AG04450 (cell line): ENCODE measurements at regions of chr1 and their contacts with region 1.

Region 1: DNA sequence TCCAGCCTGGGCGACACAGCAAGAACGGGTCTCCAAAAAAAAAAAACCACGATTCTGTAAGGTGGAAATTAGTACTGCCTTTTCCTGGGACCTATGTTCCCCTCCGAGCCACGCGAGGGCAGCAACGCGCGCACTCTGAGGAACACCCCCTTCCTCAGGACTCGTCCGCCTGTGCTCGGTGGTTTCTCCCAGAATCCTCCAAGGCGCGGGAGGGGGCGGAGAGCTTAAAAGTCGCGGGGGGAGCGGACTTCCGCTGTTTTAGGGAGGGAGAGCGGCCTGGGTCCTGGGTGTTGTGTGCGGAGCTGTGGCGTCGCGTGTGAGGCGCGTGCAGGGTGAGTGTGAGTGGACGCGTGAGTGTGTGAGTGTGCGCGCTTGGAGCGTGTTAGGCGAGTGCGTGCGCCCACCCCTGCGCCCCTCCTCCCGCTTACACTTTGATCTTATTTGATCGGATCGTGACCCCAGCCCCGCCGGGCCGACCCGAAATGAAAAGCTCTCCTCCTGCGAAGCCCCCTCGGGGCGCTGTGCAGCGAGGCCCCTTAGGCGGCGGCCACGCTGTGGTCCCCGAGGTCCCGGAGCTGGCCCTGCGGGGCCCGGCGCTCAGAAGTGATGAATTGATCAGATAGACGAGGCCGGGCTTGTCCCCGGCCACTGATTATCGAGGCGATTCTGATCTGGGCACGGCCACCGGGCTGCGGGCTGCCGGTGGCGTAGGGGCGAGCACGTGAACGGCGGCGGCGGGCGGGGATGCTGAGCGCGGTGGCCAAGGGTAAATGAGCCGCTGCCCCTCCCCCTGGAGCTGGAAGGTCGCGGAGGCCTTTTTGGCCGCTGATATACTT is 9.6 kb downstream of the TMEM167B start:
- DNase-seq: peak; percentile 94
- H3K4me3 ChIP-seq: peak overlapping the region; percentile 97
- H3K27ac ChIP-seq: peak overlapping the region; percentile 75
- H3K27me3 ChIP-seq: no peaks in the 10 kb centered on the region
- CTCF ChIP-seq: peak; percentile 84

Region 2: DNA sequence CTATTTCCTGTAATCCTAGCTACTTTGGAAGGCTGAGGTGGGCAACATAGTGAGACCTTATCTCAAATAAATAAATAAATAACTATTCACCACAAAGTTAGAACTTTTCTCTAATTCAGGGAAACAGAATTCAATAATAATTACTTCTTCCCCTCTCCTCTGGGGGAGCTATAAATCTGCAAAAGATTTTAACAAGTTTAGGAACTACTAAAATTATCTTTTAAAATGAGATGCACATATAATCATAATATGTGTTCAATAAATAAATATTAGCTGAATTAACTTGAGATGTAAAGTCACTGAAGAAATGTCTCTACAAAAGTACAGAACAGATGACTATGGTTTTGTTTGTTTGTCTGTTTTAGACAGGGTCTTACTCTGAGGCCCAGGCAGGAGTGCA is 72.3 kb before region 1 on chr1:
- CTCF ChIA-PET with region 1: interaction called, 11 read pairs
- POLR2A ChIA-PET with region 1: no interaction called
- DNase-seq: no peak
- H3K4me3 ChIP-seq: no peak overlapping the region
- H3K27ac ChIP-seq: no peak overlapping the region
- H3K27me3 ChIP-seq: no peaks in the 10 kb centered on the region
- CTCF ChIP-seq: no peak

Region 3: GRCh38 chr1:109075531-109076490 is 24.3 kb before region 1 on chr1 and contains the start of gene TAF13:
- CTCF ChIA-PET with region 1: interaction called, 10 read pairs
- POLR2A ChIA-PET with region 1: interaction called, 35 read pairs
- DNase-seq: peak; percentile 91
- H3K4me3 ChIP-seq: peak within 1 kb of the TSS; percentile 100
- H3K27ac ChIP-seq: peak within 1 kb of the TSS; percentile 99
- H3K27me3 ChIP-seq: no peaks in the 10 kb centered on the region
- CTCF ChIP-seq: peak; percentile 41; the same call in 1 of the 2 replicates
- polyA plus RNA-seq, gene TAF13: 61.8 and 81.9 TPM in 2 replicates

Region 4: DNA sequence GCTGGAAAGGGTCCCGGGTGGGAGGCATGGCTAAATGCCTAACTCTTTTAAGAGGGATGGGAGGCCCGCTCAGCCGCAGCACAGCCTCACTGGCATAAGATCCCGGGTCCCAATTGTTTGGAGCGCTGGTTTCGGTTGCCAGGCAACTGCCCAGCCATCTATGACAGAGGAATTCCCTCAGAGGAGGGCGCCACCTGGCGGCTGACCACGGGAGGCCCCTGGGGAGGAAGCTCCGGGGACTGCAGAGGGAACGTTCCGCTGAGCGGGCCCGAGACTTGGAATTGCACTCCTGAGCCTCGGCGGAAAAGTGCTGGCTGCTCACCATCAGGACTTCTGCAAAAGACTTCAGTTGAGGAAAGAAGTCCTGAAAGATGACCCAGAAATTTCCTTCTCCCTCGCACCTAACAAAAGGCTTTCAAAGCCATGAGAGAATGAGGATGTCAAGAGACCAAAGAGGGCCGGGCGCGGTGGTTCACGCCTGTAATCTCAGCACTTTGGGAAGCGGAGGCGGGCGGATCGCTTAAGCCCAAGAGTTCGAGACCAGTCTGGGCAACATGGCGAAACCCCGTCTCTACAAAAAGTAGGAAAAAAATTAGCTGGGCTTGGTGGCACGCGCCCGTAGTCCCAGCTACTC is 12.6 kb after region 1 on chr1:
- CTCF ChIA-PET with region 1: interaction called, 62 read pairs
- POLR2A ChIA-PET with region 1: interaction called, 54 read pairs
- DNase-seq: peak; percentile 66
- H3K4me3 ChIP-seq: peak overlapping the region; percentile 41; the same call in 1 of the 2 replicates
- H3K27ac ChIP-seq: peak overlapping the region; percentile 21
- H3K27me3 ChIP-seq: peaks cover 36% of the 10 kb centered on the region
- CTCF ChIP-seq: peak; percentile 95

Region 5: DNA sequence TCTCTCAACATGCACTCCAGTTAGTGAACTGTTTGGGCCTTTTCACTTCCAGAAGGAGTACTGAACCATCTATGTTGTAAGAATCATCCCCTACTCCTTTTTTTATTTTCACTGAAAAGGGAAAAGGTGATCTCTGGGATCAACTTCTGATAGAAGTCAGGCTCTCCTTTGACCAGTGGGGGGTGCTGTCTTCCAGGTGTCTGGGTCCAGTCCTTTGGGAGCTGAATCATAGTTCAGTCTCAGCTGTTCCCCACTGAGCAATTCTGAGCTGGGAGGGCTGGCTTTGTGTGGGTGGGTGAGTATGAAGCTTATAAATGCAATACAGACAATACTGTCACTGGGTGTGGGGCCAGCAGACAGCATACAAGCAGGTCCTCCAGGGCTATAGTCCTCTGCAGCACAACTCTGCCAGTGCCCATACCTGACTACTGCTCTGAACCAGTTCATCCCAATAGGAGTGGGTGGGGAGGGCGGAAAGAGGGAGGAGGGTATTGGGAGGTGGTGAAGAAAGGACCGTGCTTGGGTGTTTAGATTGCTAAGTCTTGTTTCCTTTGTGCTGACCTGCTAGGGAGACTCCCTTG is 101.1 kb after region 1 on chr1:
- CTCF ChIA-PET with region 1: interaction called, 4 read pairs
- POLR2A ChIA-PET with region 1: interaction called, 12 read pairs
- DNase-seq: peak; percentile 81
- H3K4me3 ChIP-seq: no peak overlapping the region
- H3K27ac ChIP-seq: peak overlapping the region; percentile 11
- H3K27me3 ChIP-seq: no peaks in the 10 kb centered on the region
- CTCF ChIP-seq: peak; percentile 82